PC-3 (cell line): ENCODE measurements at regions of chr12 and their contacts with region 1.

Region 1: GRCh38 chr12:57069523-57069922 is 9.1 kb downstream of the NEMP1 start:
- DNase-seq: peak; percentile 80
- ATAC-seq: peak; percentile 99
- H3K4me3 ChIP-seq: no peak overlapping the region
- H3K27ac ChIP-seq: no peak overlapping the region
- H3K4me1 ChIP-seq: no peaks in the 10 kb centered on the region
- H3K27me3 ChIP-seq: no peaks in the 10 kb centered on the region
- CTCF ChIP-seq: peak; percentile 94

Region 2: DNA sequence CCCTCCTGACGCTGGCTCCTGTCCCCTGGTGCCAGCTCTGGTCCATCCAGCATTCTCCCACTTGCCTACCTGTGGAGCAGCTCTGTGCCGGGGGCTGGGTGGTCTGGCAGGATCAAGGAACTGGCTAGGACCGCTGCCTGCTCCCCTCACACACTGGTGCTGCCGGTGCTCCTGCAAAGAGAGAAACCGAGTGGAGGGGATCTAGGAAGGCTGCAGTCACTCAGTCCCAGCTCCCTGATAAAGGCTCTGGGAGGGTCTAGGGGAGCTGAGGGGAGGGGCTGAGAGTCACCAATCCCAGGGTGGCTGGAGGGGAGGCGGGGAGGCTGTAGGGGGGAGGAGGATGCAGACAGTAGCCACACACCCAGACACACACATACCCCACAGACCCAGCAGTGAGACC is 53.2 kb before region 1 on chr12 and contains the start of gene TAC3:
- CTCF ChIA-PET with region 1: interaction called, 5 read pairs
- POLR2A ChIA-PET with region 1: interaction called, 31 read pairs
- intact Hi-C with region 1: no loop called
- DNase-seq: no peak
- ATAC-seq: no peak
- H3K4me3 ChIP-seq: no peak within 1 kb of the TSS
- H3K27ac ChIP-seq: no peak within 1 kb of the TSS
- H3K4me1 ChIP-seq: peaks cover 7% of the 10 kb centered on the region
- H3K27me3 ChIP-seq: peaks cover 35% of the 10 kb centered on the region
- CTCF ChIP-seq: no peak
- total RNA-seq, gene TAC3: not detected in 2 replicates

Region 3: DNA sequence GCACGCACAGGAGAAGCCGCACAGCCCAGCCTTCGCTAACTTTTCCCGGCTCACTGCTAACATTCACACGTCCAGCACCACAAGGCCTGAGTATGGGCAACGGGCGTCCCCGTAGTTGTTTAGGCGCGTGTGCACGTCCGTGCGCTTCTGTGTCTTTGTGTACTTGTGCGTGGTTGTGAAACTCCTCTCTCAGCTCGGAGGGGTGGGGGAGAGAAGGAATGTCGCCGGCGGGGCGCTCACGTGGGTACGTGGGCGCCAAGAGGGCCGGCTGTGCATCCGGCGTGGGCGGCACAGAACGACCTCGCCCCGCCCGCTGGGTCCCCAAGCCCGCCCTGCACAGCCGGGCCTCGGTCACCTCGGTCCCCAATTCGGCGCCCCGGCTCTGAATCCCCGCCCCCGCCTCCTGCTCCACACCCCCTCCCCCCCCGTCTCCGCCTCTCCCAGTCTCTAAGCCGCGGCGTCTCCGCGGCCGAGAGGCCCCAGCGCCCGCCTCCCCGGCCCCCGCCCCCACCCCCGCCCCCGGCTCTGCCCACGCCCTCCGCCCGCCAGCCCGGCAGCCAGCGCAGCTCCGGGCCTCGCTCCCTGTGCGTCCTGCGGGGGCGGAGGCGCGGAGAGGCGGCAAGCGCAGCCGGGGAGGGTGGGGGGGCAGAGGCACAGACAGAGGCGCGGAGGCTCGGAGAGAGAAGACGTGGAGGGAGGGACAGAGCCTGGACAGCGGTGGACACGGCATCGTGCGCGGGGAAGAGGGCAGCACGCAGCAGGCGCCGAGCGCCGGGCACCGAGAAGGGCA is 19.1 kb after region 1 on chr12 and contains the start of gene NAB2:
- CTCF ChIA-PET with region 1: interaction called, 10 read pairs
- POLR2A ChIA-PET with region 1: no interaction called
- intact Hi-C with region 1: no loop called
- DNase-seq: peak; percentile 92
- ATAC-seq: peak; percentile 54
- H3K4me3 ChIP-seq: peak within 1 kb of the TSS; percentile 94
- H3K27ac ChIP-seq: peak within 1 kb of the TSS; percentile 98
- H3K4me1 ChIP-seq: peaks cover 25% of the 10 kb centered on the region
- H3K27me3 ChIP-seq: no peaks in the 10 kb centered on the region
- CTCF ChIP-seq: no peak
- total RNA-seq, gene NAB2: 17.4 and 20.2 TPM in 2 replicates

Region 4: GRCh38 chr12:57111031-57111734 is 41.7 kb after region 1 on chr12 and contains the start of gene STAT6:
- CTCF ChIA-PET with region 1: interaction called, 78 read pairs
- POLR2A ChIA-PET with region 1: interaction called, 11 read pairs
- intact Hi-C with region 1: loop called (anchors 1 kb)
- DNase-seq: peak; percentile 59
- ATAC-seq: peak; percentile 53
- H3K4me3 ChIP-seq: peak within 1 kb of the TSS; percentile 69
- H3K27ac ChIP-seq: peak within 1 kb of the TSS; percentile 82
- H3K4me1 ChIP-seq: peaks cover 32% of the 10 kb centered on the region
- H3K27me3 ChIP-seq: no peaks in the 10 kb centered on the region
- CTCF ChIP-seq: no peak
- total RNA-seq, gene STAT6: 20.8 and 28.4 TPM in 2 replicates

Region 5: DNA sequence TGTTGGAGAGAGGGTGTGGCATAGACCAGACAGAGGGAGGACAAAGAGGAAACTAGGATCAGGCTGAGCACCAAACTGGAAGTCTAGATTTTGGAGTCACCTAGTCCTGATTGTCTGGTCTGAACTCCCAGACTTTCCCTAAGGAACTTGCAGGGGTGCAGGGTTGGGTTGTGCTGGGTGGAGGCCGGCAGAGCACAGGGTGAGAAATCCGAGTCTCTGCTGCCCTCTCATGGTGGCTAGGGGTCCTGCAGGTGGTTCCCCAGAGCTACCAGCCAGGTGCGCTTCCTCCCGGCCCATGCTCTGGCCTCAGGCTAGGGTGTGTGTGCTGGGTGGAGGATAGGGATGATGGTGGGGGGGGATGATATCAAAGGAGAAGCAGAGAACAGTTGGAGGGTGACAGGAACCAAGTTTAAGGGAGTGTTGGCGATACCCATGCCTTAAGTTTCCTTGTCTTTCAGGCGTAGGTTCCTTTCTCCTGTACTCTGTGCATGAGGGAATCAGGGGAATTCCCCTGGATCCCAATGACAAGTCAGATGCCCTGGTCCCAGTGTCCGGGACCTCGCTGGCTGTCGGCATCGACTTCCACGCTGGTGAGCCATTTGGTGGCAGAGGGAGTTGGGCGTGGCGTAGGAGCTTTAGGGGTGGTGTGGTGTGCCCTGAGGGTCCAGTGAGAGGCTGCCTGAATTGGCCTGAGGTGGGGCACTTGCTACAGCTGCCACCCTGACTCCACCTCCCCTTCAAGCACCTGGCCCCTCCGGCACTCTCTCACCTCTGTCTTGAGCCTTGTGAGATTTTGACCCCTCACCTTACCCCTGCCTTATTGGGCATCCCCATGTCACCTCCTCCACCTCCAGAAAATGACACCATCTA is 113.6 kb after region 1 on chr12:
- CTCF ChIA-PET with region 1: interaction called, 4 read pairs
- POLR2A ChIA-PET with region 1: no interaction called
- intact Hi-C with region 1: loop called (anchors 5 kb)
- DNase-seq: peak; percentile 92
- ATAC-seq: peak; percentile 99
- H3K4me3 ChIP-seq: no peak overlapping the region
- H3K27ac ChIP-seq: no peak overlapping the region
- H3K4me1 ChIP-seq: peaks cover 9% of the 10 kb centered on the region; the same call in 1 of the 2 replicates
- H3K27me3 ChIP-seq: no peaks in the 10 kb centered on the region
- CTCF ChIP-seq: peak; percentile 93

Region 6: DNA sequence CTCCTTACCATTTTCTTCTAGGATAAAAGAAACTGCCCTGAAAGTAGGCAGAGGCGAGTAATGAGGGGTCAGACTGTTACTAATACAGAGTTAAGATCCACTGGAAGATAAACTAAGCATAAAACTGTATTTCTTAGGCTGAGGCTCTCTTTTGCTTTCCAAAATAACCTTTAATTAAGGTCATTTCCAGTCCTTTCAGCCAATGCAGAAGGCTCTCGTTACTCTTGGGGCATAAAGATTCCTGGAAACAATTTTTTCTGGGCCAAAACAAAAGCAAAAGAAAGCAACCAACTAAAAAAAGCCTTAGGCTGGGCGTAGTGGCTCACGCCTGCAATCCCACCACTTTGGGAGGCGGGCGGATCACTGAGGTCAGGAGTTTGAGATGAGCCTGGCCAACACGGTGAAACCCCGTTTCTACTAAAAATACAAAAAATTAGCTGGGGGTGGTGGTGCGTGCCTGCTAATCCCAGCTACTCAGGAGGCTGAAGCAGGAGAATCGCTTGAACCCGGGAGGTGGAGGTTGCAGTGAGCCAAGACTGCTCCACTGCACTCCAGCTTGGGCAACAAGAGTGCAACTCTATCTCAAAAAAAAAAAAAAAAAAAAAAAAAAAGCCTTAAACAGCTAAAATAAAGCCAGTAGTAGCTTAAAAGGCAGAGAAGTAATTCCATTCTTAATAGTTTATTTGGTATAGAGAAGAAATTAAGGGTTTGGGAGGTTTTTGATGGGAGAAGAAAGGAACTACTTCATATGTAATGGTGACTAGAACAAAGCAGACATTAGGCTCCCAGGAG is 250.4 kb after region 1 on chr12:
- CTCF ChIA-PET with region 1: no interaction called
- POLR2A ChIA-PET with region 1: no interaction called
- intact Hi-C with region 1: no loop called
- DNase-seq: no peak
- ATAC-seq: no peak; the same call in 1 of the 2 replicates
- H3K4me3 ChIP-seq: no peak overlapping the region
- H3K27ac ChIP-seq: no peak overlapping the region
- H3K4me1 ChIP-seq: peaks cover 6% of the 10 kb centered on the region; the same call in 1 of the 2 replicates
- H3K27me3 ChIP-seq: no peaks in the 10 kb centered on the region
- CTCF ChIP-seq: no peak